Right cardiac atrium (tissue), 5 donors: ENCODE measurements at regions of chr15 and their contacts with region 1.

Region 1: GRCh38 chr15:41972253-41973242 is at the start of gene EHD4:
- DNase-seq: peak; percentile 99 to 100 (median 99)
- ATAC-seq: peak; percentile 98
- H3K4me3 ChIP-seq: peak within 1 kb of the TSS; percentile 81
- H3K27ac ChIP-seq: peak within 1 kb of the TSS; percentile 88
- H3K4me1 ChIP-seq: peaks cover 5% of the 10 kb centered on the region
- H3K27me3 ChIP-seq: no peaks in the 10 kb centered on the region
- total RNA-seq, gene EHD4: 31.7 to 37.4 (median 35.3) TPM

Region 2: GRCh38 chr15:41936649-41937567 is 35.6 kb before region 1 on chr15:
- intact Hi-C with region 1: loop called in 1 of 4 experiments (anchors 5 kb)
- DNase-seq: peak in 2 of 3 donors; percentile 62 to 78
- ATAC-seq: peak; percentile 44 to 71
- H3K4me3 ChIP-seq: no peak overlapping the region
- H3K27ac ChIP-seq: peak overlapping the region; percentile 92
- H3K4me1 ChIP-seq: peaks cover 23% of the 10 kb centered on the region
- H3K27me3 ChIP-seq: no peaks in the 10 kb centered on the region